Activated B cell treated with CpG ODN at 0.5 μM for 24 hours (primary cell): ENCODE measurements at regions of chr12 and their contacts with region 1.

Region 1: DNA sequence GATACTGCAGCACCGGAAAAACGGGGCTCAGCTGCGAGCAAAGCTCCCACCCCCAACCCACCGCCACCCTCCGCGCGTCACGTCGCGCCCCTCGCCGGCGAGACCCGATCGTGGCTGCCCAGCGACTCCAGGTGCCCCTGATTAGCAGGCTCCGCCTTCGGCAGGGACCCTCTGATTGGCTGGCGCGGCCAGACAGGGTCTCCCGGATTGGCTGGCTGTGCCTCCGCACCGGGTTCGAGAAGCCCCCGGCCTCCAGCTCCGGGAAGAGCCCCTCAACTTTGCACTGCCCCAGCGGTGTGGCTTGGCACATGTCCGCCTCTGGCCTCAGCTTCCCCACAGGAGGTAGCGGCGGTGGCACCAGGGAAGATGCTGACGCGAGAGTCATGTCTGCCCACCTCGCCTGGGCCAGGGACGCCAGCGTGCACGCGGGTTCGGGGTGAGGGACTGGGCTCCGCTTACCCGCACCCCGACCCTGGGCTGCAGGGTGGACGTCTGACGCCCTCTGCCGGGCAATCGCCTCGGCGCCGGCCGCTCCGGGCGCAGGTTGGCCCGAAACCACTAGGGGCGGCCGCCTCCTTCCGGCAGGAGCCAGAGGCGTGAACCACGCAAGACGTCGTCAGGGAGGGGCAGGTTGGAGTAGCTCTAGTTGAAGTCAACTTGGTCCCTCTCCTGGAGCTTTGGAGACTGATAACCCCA is 498 bp upstream of the RHOF start:
- DNase-seq: peak; percentile 96
- ATAC-seq: peak; percentile 55
- H3K4me3 Mint-ChIP-seq: peak overlapping the region; percentile 85
- H3K27ac Mint-ChIP-seq: peak overlapping the region; percentile 88
- H3K4me1 Mint-ChIP-seq: peaks cover 65% of the 10 kb centered on the region
- H3K27me3 Mint-ChIP-seq: no peaks in the 10 kb centered on the region
- CTCF ChIP-seq: peak; percentile 25

Region 2: DNA sequence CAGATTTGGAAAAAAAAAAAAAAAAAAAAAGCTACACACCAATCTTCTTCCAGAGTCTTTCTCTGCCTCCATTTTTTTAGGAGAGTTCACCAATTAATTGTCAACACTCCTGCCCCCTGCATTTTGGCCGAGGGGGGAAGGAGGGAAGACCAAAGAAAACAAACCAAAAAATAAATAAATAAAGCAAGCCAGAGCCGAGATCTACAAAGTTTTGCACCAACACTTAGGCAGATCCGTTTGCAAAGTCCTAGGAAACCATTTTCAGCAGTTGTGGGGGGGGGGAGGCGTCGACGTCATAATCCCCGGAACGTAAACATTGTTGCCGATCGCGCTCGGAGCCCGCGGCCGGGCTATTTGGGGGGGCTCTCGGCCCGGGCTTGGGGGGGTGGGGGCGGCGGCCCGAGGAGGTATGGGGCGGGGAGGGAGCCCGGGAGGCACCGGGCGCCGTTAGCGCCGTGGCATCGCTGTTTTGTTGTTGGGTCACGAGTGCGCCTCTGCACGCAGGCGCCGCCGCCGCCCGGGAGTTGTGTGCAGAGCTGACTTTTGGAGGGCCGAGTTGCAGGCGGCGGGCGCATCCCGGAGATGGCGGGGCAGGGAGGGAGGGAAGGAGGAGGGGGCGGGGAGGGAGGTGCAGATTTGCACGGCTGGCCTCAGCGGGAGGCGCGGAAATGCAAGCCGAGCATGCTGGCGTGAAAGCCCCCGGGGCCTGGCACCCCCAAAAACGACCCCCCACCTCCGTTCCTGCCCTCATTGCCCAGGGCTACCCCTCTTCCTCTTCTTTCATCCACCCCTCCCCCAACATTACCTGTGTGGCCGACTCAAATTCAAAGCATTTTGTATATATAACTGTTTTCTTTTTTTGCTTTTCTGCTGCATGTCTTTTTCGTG is 213.8 kb before region 1 on chr12:
- CTCF ChIA-PET with region 1: no interaction called
- POLR2A ChIA-PET with region 1: interaction called, 11 read pairs
- intact Hi-C with region 1: no loop called
- DNase-seq: peak; percentile 60
- ATAC-seq: peak; percentile 52
- H3K4me3 Mint-ChIP-seq: peak overlapping the region; percentile 95
- H3K27ac Mint-ChIP-seq: peak overlapping the region; percentile 95
- H3K4me1 Mint-ChIP-seq: peaks cover 45% of the 10 kb centered on the region
- H3K27me3 Mint-ChIP-seq: no peaks in the 10 kb centered on the region
- CTCF ChIP-seq: no peak

Region 3: GRCh38 chr12:121697098-121697698 is 96.8 kb before region 1 on chr12:
- CTCF ChIA-PET with region 1: interaction called, 50 read pairs
- POLR2A ChIA-PET with region 1: interaction called, 9 read pairs
- intact Hi-C with region 1: loop called (anchors 1 kb)
- DNase-seq: no peak
- ATAC-seq: peak; percentile 31
- H3K4me3 Mint-ChIP-seq: no peak overlapping the region
- H3K27ac Mint-ChIP-seq: no peak overlapping the region
- H3K4me1 Mint-ChIP-seq: no peaks in the 10 kb centered on the region
- H3K27me3 Mint-ChIP-seq: peaks cover 2% of the 10 kb centered on the region
- CTCF ChIP-seq: no peak

Region 4: GRCh38 chr12:121773011-121773777 is 20.8 kb before region 1 on chr12:
- CTCF ChIA-PET with region 1: interaction called, 387 read pairs
- POLR2A ChIA-PET with region 1: interaction called, 1,155 read pairs
- intact Hi-C with region 1: loop called (anchors 1 kb)
- DNase-seq: peak; percentile 72
- ATAC-seq: peak; percentile 91
- H3K4me3 Mint-ChIP-seq: no peak overlapping the region
- H3K27ac Mint-ChIP-seq: peak overlapping the region; percentile 66
- H3K4me1 Mint-ChIP-seq: peaks cover 17% of the 10 kb centered on the region
- H3K27me3 Mint-ChIP-seq: no peaks in the 10 kb centered on the region
- CTCF ChIP-seq: no peak

Region 5: GRCh38 chr12:121811434-121812319 is 17.7 kb after region 1 on chr12:
- CTCF ChIA-PET with region 1: interaction called, 635 read pairs
- POLR2A ChIA-PET with region 1: interaction called, 1,155 read pairs
- intact Hi-C with region 1: loop called (anchors 1 kb)
- DNase-seq: peak; percentile 81
- ATAC-seq: peak; percentile 83
- H3K4me3 Mint-ChIP-seq: peak overlapping the region; percentile 74
- H3K27ac Mint-ChIP-seq: peak overlapping the region; percentile 18
- H3K4me1 Mint-ChIP-seq: peaks cover 54% of the 10 kb centered on the region
- H3K27me3 Mint-ChIP-seq: no peaks in the 10 kb centered on the region
- CTCF ChIP-seq: peak; percentile 100

Region 6: DNA sequence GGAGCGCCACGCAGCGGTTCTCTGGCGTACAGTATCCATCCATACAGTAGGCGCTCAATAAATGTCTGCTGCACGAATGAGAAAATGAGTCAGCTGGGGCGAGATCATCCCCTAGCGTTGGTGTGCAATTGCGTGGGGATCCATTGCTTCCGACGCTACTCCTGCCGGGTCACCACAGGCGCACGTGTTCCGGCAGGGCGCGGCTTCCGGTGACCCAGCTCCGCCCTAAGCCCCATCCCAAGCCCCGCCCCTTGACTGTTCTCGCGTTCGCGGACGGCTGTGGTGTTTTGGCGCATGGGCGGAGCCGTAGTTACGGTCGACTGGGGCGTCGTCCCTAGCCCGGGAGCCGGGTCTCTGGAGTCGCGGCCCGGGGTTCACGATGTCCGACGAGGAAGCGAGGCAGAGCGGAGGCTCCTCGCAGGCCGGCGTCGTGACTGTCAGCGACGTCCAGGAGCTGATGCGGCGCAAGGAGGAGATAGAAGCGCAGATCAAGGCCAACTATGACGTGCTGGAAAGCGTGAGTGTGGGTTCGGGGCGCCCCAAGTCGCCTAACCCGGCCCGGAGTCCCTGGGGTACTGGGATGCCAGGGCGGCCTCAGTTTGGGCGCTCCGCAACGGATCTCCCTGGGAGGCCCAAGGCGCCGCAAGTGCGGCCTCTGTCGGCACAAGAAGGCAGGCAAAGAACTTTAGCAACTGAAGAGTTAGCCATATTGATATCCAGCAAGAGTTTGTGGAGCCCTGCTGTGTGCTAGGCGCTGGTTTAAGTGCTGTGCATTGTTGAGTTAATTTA is 94.7 kb after region 1 on chr12 and contains the start of gene PSMD9:
- CTCF ChIA-PET with region 1: interaction called, 47 read pairs
- POLR2A ChIA-PET with region 1: interaction called, 25 read pairs
- intact Hi-C with region 1: loop called (anchors 1 kb)
- DNase-seq: peak; percentile 97
- ATAC-seq: peak; percentile 95
- H3K4me3 Mint-ChIP-seq: peak within 1 kb of the TSS; percentile 98
- H3K27ac Mint-ChIP-seq: peak within 1 kb of the TSS; percentile 98
- H3K4me1 Mint-ChIP-seq: peaks cover 29% of the 10 kb centered on the region
- H3K27me3 Mint-ChIP-seq: peaks cover 2% of the 10 kb centered on the region
- CTCF ChIP-seq: no peak
- total RNA-seq, gene PSMD9: 35.9 and 40.2 TPM in 2 replicates

Region 7: GRCh38 chr12:121992059-121992879 is 198.3 kb after region 1 on chr12:
- CTCF ChIA-PET with region 1: no interaction called
- POLR2A ChIA-PET with region 1: no interaction called
- intact Hi-C with region 1: no loop called
- DNase-seq: peak; percentile 48
- ATAC-seq: peak; percentile 87
- H3K4me3 Mint-ChIP-seq: peak overlapping the region; percentile 75
- H3K27ac Mint-ChIP-seq: peak overlapping the region; percentile 97
- H3K4me1 Mint-ChIP-seq: peaks cover 49% of the 10 kb centered on the region
- H3K27me3 Mint-ChIP-seq: no peaks in the 10 kb centered on the region
- CTCF ChIP-seq: no peak

Region 8: DNA sequence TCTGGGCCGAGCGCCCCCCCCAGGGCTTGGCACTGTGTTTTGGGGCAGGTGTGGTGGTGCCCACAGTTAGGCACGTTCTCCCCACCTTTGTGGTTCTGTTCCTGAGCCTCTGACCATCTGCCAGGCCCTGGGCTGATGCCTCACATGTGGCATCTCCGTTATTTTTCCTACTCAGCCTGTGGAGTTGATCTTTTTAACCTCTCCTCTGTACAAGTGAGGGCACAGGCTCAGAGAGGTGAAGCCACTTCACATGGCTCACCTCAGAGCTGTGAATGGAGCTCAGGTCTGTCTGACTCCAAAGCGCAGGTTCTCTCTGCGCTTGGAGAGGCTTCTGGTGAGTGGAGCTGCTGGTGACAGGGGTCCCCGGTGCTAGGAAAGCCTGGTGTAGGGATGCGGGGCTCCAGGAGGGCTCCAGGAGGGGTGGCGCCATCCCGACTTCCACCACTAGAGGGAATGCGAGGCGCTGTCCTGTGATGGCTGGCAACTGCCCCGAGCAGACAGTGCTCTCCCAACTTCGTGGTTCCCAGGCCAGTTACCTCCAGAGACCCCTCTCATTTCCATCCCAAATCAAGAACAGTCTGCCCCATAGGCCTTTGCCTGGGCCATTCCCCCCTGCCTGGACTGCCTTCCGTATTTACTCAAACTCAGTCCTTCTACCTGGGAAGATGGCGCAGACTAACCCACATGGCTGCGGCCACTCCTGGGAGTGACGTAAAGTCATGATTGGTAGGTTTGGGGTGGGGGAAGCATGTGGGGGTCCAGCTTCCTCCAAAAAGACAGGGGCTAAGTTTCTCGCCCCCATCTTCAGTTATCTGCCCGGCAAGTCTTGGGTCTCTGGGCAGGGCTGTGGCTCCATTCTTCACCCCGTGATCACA is 237.6 kb after region 1 on chr12:
- CTCF ChIA-PET with region 1: no interaction called
- POLR2A ChIA-PET with region 1: no interaction called
- intact Hi-C with region 1: loop called (anchors 5 kb)
- DNase-seq: peak; percentile 61
- ATAC-seq: peak; percentile 21
- H3K4me3 Mint-ChIP-seq: no peak overlapping the region
- H3K27ac Mint-ChIP-seq: peak overlapping the region; percentile 81
- H3K4me1 Mint-ChIP-seq: peaks cover 63% of the 10 kb centered on the region
- H3K27me3 Mint-ChIP-seq: no peaks in the 10 kb centered on the region
- CTCF ChIP-seq: no peak